HepG2 (cell line): ENCODE measurements at regions of chr12 and their contacts with region 1.

Region 1: GRCh38 chr12:70365648-70366518 is at the start of gene KCNMB4:
- DNase-seq: peak; percentile 36
- ATAC-seq: peak; percentile 88
- H3K4me3 ChIP-seq: peak within 1 kb of the TSS; percentile 69 to 78 (median 77)
- H3K27ac ChIP-seq: no peak within 1 kb of the TSS
- H3K4me1 ChIP-seq: peaks cover 20% of the 10 kb centered on the region
- H3K27me3 ChIP-seq: peaks cover 0 to 21% of the 10 kb centered on the region in 2 experiments; a peak in 4 of 5 replicates
- CTCF ChIP-seq: no peak
- EP300 ChIP-seq: no peak
- POLR2A ChIP-seq: no peak
- RAD21 ChIP-seq: no peak
- total RNA-seq, gene KCNMB4: 0.84 and 1.7 TPM in 2 replicates

Region 2: DNA sequence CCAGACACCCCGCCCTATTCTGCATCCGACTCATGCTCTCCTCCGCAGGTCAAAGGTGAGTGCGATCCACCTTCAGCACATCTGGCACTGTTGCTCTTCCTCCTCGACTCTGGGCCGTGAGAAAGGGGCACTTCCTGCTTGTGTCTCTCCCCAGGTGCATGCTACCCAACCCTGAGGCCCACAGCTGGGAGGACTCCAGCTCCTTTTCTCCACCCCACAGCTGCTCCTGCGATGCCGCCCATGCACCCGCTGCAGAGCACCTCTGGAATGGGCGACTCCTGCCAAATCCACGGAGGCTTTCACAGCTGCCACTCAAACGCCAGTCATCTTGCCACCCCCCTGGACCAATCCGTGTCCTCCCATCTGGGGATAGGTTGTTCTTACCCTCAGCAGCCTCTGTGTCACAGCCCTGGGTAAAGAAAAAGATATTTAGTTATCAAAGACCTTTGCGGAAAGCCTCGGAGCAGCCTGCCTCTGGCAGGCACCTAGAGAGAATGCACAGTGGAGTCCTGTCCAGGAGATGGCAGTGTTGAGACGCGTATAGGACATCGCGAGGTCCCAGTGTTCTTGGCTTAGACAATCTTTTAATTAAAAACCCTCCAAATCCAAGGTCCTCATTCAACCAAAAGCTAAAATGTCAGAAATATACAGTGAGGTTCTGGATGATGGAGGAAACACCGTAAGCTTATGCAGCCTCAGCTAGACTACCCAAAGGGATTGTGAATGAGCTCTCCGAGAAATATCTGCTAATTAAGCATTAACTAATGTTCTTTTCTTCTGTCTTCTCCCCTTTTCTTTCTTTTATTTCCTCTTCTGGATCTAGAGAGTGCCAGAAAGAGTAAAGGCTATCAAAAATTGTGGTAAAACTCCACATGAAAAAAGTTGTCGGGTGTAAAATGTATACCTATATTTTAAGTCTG is 486.6 kb before region 1 on chr12:
- CTCF ChIA-PET with region 1: no interaction called
- POLR2A ChIA-PET with region 1: no interaction called
- in situ Hi-C with region 1: loop called (anchors 25 kb)
- intact Hi-C with region 1: no loop called
- DNase-seq: peak; percentile 51
- ATAC-seq: peak; percentile 97
- H3K4me3 ChIP-seq: no peak overlapping the region
- H3K27ac ChIP-seq: no peak overlapping the region
- H3K4me1 ChIP-seq: no peaks in the 10 kb centered on the region
- H3K27me3 ChIP-seq: peaks cover 0 to 13% of the 10 kb centered on the region in 2 experiments; a peak in 2 of 5 replicates
- CTCF ChIP-seq: peak; percentile 84
- EP300 ChIP-seq: no peak
- POLR2A ChIP-seq: no peak
- RAD21 ChIP-seq: peak; percentile 76

Region 3: GRCh38 chr12:69985656-69986055 is 380.2 kb before region 1 on chr12:
- CTCF ChIA-PET with region 1: no interaction called
- POLR2A ChIA-PET with region 1: no interaction called
- in situ Hi-C with region 1: no loop called
- intact Hi-C with region 1: loop called (anchors 2 kb)
- DNase-seq: peak; percentile 24
- ATAC-seq: peak; percentile 98
- H3K4me3 ChIP-seq: no peak overlapping the region
- H3K27ac ChIP-seq: no peak overlapping the region
- H3K4me1 ChIP-seq: no peaks in the 10 kb centered on the region
- H3K27me3 ChIP-seq: no peaks in the 10 kb centered on the region
- CTCF ChIP-seq: peak; percentile 64
- EP300 ChIP-seq: no peak
- POLR2A ChIP-seq: no peak
- RAD21 ChIP-seq: 0 out of 2 replicates have a peak, but pooled peaks have one; percentile 34

Region 4: DNA sequence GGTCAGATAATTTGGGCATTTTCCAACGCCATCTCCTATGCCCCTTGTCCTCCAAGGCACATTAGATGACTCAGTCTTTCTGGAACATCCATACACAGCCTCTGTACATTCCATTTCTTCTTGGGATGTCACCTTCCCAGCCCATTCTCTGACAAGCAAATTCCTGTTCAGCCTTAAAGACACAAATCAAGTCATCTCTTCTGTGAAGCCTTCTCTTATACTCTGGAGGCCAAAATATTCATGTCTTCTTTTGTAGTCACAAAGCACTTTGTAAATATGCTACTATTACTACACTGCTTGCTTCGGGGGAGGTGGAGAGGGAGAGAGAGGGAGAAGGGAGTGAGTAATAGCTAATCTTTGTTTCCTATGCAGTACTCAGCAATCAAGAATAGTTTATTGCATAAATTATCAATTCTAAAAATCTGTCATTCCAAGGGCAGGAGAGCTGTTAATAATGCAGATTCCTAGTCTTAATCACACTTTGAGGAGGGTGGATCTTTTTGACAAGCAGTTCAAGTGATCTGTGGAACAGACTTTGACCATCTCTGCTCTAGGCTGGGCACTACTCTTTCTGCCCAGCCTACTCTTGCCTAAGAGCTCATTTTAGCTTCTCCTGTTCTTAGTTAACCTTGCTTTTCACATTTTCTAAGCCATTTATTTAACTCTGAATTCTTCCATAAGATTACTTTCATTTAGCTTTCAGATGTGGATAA is 28.1 kb after region 1 on chr12:
- CTCF ChIA-PET with region 1: no interaction called
- POLR2A ChIA-PET with region 1: no interaction called
- in situ Hi-C with region 1: no loop called
- intact Hi-C with region 1: no loop called
- DNase-seq: no peak
- ATAC-seq: peak; percentile 50; the same call in 2 of the 3 replicates
- H3K4me3 ChIP-seq: no peak overlapping the region
- H3K27ac ChIP-seq: no peak overlapping the region
- H3K4me1 ChIP-seq: no peaks in the 10 kb centered on the region; the same call in 1 of the 2 replicates
- H3K27me3 ChIP-seq: no peaks in the 10 kb centered on the region
- CTCF ChIP-seq: no peak
- EP300 ChIP-seq: no peak
- POLR2A ChIP-seq: no peak
- RAD21 ChIP-seq: no peak